Activated CD4-positive, alpha-beta T cell treated with anti-CD3 and anti-CD28 coated beads for 36 hours (primary cell): ENCODE measurements at regions of chr4 and their contacts with region 1.

Region 1: DNA sequence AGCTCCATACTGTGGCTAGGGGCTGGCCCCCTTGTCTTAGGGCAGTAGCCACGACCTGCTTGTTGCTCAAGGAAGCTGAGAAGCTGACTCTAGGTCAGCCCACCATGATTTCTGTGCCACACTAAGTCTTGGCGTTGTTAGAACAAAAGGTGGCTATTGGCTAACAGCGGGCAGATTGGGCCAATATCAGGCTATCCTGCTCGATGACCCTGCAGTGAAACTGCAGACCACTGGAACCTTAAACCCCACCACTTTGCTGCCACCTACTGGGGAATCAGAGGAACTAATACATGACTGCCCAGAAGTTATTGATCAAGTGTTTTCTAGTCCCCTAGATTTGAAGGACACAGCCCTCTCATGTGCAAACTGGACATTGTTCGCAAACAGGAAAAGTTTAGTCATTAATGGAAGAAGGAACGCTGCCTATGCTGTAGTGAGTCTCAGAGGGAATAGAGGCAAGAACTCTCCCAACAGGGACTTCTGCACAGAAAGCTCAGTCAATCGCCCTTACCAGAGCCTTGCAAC is 17.0 kb upstream of the PAPSS1 start:
- DNase-seq: peak; percentile 50
- ATAC-seq: peak; percentile 64
- H3K4me3 Mint-ChIP-seq: no peak overlapping the region
- H3K27ac Mint-ChIP-seq: no peak overlapping the region
- H3K4me1 Mint-ChIP-seq: no peaks in the 10 kb centered on the region
- H3K27me3 Mint-ChIP-seq: no peaks in the 10 kb centered on the region

Region 2: GRCh38 chr4:106738121-106738520 is 998.9 kb before region 1 on chr4:
- CTCF ChIA-PET with region 1: no interaction called
- POLR2A ChIA-PET with region 1: no interaction called
- intact Hi-C with region 1: no loop called
- DNase-seq: no peak
- ATAC-seq: no peak
- H3K4me3 Mint-ChIP-seq: no peak overlapping the region
- H3K27ac Mint-ChIP-seq: no peak overlapping the region
- H3K4me1 Mint-ChIP-seq: no peaks in the 10 kb centered on the region
- H3K27me3 Mint-ChIP-seq: no peaks in the 10 kb centered on the region

Region 3: DNA sequence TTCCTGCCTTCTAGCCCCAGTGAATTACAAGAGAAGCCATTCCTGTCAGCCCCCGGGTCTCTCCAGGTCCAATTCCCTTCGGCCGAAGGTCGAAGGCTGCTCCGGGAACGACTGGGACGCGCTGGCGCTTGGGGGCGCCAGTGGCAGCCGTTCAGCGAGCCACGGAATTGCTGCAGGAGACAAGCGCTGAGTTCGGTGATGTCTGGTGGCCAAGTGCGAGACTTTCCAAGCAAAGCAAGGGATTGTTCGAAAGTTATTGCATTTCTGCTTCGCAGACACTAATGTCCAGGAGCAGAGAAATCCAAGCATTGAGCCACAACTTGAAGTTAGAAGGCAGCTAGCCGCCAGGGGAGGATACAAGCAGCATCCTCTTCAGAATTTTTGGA is 699.8 kb before region 1 on chr4:
- CTCF ChIA-PET with region 1: no interaction called
- POLR2A ChIA-PET with region 1: no interaction called
- intact Hi-C with region 1: loop called in 1 of 2 experiments (anchors 5 kb)
- DNase-seq: peak; percentile 40
- ATAC-seq: peak; percentile 38
- H3K4me3 Mint-ChIP-seq: no peak overlapping the region
- H3K27ac Mint-ChIP-seq: no peak overlapping the region
- H3K4me1 Mint-ChIP-seq: peaks cover 24% of the 10 kb centered on the region
- H3K27me3 Mint-ChIP-seq: peaks cover 54% of the 10 kb centered on the region

Region 4: DNA sequence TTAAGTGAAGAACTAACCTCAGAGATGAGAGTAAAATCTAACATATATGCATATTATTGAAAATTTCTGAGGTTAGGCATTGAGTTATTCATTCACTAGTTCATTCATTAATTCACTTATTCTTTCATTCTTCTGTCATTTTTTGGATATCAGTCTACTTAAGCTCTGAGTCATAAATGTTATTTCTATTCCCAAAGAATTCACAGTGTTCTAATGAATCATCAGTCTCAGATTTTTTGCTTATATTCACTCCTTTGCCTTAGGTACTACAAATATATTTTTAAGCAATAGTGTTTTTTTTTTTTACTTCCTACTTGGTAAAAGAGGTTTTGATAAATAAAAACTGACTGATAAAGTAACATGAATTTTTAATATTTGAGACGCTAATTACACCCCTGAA is 605.7 kb before region 1 on chr4:
- CTCF ChIA-PET with region 1: no interaction called
- POLR2A ChIA-PET with region 1: no interaction called
- intact Hi-C with region 1: no loop called
- DNase-seq: no peak
- ATAC-seq: no peak
- H3K4me3 Mint-ChIP-seq: no peak overlapping the region
- H3K27ac Mint-ChIP-seq: no peak overlapping the region
- H3K4me1 Mint-ChIP-seq: no peaks in the 10 kb centered on the region
- H3K27me3 Mint-ChIP-seq: peaks cover 9% of the 10 kb centered on the region

Region 5: DNA sequence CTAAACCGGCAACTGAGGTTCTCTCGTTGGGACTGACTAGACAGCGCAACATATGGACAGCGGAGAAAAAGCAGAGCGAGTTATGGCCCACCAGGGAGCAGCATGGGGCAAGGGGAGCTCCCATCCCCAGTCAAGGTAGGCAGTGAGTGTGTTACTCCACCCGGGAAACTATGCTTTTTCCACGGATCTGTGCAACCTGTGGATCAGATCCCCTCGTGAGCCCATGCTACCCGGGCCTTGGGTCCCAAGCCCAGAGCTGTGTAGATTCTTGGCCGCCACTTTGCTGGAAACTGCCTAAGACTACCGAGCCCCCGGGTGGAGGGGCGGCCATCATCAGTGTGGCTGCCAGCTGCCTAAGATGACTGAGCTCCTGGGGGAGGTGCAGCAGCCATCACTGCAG is 157.9 kb before region 1 on chr4:
- CTCF ChIA-PET with region 1: no interaction called
- POLR2A ChIA-PET with region 1: no interaction called
- intact Hi-C with region 1: loop called in 1 of 2 experiments (anchors 5 kb)
- DNase-seq: no peak
- ATAC-seq: no peak
- H3K4me3 Mint-ChIP-seq: no peak overlapping the region
- H3K27ac Mint-ChIP-seq: no peak overlapping the region
- H3K4me1 Mint-ChIP-seq: no peaks in the 10 kb centered on the region
- H3K27me3 Mint-ChIP-seq: peaks cover 3% of the 10 kb centered on the region

Region 6: GRCh38 chr4:107747748-107748486 is 10.9 kb after region 1 on chr4:
- CTCF ChIA-PET with region 1: interaction called, 17 read pairs
- POLR2A ChIA-PET with region 1: no interaction called
- intact Hi-C with region 1: no loop called
- DNase-seq: no peak
- ATAC-seq: no peak
- H3K4me3 Mint-ChIP-seq: no peak overlapping the region
- H3K27ac Mint-ChIP-seq: no peak overlapping the region
- H3K4me1 Mint-ChIP-seq: peaks cover 2% of the 10 kb centered on the region
- H3K27me3 Mint-ChIP-seq: peaks cover 19% of the 10 kb centered on the region

Region 7: GRCh38 chr4:108097990-108098553 is 361.1 kb after region 1 on chr4:
- CTCF ChIA-PET with region 1: no interaction called
- POLR2A ChIA-PET with region 1: no interaction called
- intact Hi-C with region 1: no loop called
- DNase-seq: peak; percentile 27
- ATAC-seq: no peak
- H3K4me3 Mint-ChIP-seq: no peak overlapping the region
- H3K27ac Mint-ChIP-seq: peak overlapping the region; percentile 84
- H3K4me1 Mint-ChIP-seq: peaks cover 94% of the 10 kb centered on the region
- H3K27me3 Mint-ChIP-seq: no peaks in the 10 kb centered on the region